WTC11 (cell line): ENCODE measurements at regions of chr3 and their contacts with region 1.

Region 1: DNA sequence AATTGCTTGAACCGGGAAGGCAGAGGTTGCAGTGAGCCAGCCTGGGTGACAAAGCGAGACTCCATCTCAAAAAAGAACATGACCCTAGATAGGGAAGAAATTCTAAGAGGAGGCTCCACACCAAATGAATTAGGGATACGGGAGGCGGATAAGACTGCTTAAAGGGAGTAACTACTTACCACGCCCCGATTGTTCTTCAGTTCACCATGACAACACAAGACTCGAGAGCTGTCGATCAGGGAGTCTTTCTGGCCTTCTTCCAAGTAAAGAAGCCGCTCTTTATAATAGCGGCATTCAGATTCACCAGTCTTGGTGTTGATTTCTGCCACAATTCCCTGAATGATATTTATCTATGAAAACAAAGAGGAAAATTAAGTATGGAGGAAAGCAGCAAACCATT is 53.9 kb upstream of the TASOR start:
- DNase-seq: no peak
- ATAC-seq: no peak
- H3K4me3 Mint-ChIP-seq: no peak overlapping the region
- H3K27ac Mint-ChIP-seq: no peak overlapping the region
- H3K4me1 Mint-ChIP-seq: peaks cover 3% of the 10 kb centered on the region
- H3K27me3 Mint-ChIP-seq: no peaks in the 10 kb centered on the region
- CTCF ChIP-seq: no peak

Region 2: DNA sequence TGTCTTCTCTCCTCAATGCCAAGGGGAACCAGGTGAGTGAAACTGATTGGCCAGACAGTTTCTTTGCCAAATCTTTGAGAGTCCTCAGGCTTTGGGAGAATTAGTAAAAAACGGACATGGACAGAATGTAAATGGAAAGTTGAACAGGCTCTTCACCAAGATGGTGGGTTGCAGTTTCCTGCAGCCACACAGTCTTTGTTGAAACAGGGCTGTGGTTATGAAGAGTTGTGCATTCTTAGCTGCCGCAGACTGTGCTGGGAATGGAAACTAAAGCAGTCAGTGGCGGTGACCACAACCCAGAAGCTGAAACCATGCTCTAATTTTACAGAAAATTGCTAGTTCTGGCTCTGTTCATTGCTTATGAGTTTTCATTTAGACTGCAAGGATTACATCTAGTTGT is 11.8 kb before region 1 on chr3:
- CTCF ChIA-PET with region 1: no interaction called
- POLR2A ChIA-PET with region 1: interaction called, 11 read pairs
- DNase-seq: no peak
- ATAC-seq: no peak
- H3K4me3 Mint-ChIP-seq: no peak overlapping the region
- H3K27ac Mint-ChIP-seq: no peak overlapping the region
- H3K4me1 Mint-ChIP-seq: no peaks in the 10 kb centered on the region
- H3K27me3 Mint-ChIP-seq: no peaks in the 10 kb centered on the region
- CTCF ChIP-seq: no peak

Region 3: GRCh38 chr3:56787784-56788256 is 50.8 kb after region 1 on chr3:
- CTCF ChIA-PET with region 1: no interaction called
- POLR2A ChIA-PET with region 1: no interaction called
- DNase-seq: no peak
- ATAC-seq: no peak
- H3K4me3 Mint-ChIP-seq: no peak overlapping the region
- H3K27ac Mint-ChIP-seq: no peak overlapping the region
- H3K4me1 Mint-ChIP-seq: peaks cover 14% of the 10 kb centered on the region; the same call in 1 of the 2 replicates
- H3K27me3 Mint-ChIP-seq: no peaks in the 10 kb centered on the region
- CTCF ChIP-seq: no peak

Region 4: DNA sequence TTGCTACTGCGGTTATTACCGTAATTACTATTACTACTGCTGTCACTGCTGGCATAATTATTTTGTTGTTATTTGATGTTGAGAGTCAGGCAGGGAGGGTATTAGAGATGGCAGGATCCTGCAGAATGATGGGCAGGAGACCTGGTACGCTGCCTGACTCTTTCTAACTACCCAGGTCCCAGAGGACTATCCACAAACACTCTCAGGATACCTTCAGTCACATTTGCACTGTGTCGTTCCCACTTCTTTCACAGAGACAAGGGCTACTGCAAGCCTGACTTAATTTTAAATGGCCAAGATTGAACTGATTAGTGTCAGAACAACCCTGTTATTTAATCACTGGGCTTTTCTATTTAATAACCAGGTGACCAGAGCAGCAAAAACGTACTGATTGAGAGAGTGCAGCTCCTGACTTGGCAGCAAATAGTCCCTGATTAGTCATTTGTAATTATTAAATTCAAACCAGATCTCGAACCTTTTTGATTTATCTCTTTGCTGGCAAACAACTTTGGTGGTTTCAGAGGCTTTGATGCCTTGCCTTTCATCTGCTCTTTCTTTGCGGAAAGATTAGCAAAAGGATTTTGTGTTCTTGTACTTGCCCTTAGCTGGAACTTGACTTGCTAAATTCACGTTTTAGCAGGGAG is 153.6 kb after region 1 on chr3:
- CTCF ChIA-PET with region 1: no interaction called
- POLR2A ChIA-PET with region 1: no interaction called
- DNase-seq: no peak
- ATAC-seq: no peak
- H3K4me3 Mint-ChIP-seq: no peak overlapping the region
- H3K27ac Mint-ChIP-seq: no peak overlapping the region
- H3K4me1 Mint-ChIP-seq: peaks cover under 1% of the 10 kb centered on the region; the same call in 1 of the 2 replicates
- H3K27me3 Mint-ChIP-seq: no peaks in the 10 kb centered on the region
- CTCF ChIP-seq: no peak